ENCODE measurements at regions of chr2 and their contacts with region 1.

Region 1: DNA sequence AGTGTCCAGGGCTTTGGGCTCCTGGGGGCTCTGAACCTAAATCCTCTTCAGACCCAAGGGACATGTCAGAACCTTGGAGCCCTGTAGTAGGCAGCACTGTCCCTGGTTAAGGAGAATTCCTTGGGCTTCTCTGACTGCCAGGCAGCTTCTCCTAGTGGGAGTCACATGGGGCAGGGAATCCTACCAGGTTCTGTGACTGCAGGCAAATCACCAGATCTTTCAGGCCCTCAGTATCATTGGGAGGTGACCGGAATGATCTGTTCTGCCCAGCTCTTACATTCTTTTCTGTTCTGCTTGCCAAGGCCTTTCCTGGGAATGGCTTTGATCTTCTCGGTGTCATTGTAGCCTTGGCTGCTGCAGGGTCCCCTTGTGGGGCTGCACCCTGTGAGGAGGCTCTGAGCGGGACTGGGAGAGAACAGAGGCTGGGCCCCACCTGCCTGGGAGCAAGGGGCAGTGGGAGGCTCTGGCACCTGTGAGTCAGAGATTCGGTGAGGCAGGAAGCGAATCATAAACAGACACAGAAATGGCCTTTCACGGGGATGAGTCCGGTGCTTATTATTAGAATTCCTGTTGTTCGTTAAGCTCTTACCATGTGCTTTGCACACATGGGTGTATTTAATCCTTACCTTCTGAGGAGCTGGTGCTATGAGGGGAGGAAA is 14.1 kb downstream of the CEP68 start:
- DNase-seq: peak; percentile 64
- H3K4me3 ChIP-seq: no peak overlapping the region
- H3K27ac ChIP-seq: peak overlapping the region; percentile 23
- H3K4me1 ChIP-seq: peaks cover 45% of the 10 kb centered on the region
- H3K27me3 ChIP-seq: no peaks in the 10 kb centered on the region
- CTCF ChIP-seq: peak in 1 of 2 donors; percentile 45

Region 2: GRCh38 chr2:64192125-64192479 is 878.2 kb before region 1 on chr2:
- CTCF ChIA-PET with region 1: no interaction called
- dilution Hi-C with region 1: no loop called
- in situ Hi-C with region 1: no loop called
- intact Hi-C with region 1: no loop called
- DNase-seq: no peak
- H3K4me3 ChIP-seq: no peak overlapping the region
- H3K27ac ChIP-seq: no peak overlapping the region
- H3K4me1 ChIP-seq: no peaks in the 10 kb centered on the region
- H3K27me3 ChIP-seq: no peaks in the 10 kb centered on the region
- CTCF ChIP-seq: no peak

Region 3: GRCh38 chr2:65096948-65097347 is 26.6 kb after region 1 on chr2:
- CTCF ChIA-PET with region 1: no interaction called
- dilution Hi-C with region 1: no loop called
- in situ Hi-C with region 1: no loop called
- intact Hi-C with region 1: no loop called
- DNase-seq: peak; percentile 6
- H3K4me3 ChIP-seq: no peak overlapping the region
- H3K27ac ChIP-seq: no peak overlapping the region
- H3K4me1 ChIP-seq: no peaks in the 10 kb centered on the region
- H3K27me3 ChIP-seq: no peaks in the 10 kb centered on the region
- CTCF ChIP-seq: no peak

Region 4: DNA sequence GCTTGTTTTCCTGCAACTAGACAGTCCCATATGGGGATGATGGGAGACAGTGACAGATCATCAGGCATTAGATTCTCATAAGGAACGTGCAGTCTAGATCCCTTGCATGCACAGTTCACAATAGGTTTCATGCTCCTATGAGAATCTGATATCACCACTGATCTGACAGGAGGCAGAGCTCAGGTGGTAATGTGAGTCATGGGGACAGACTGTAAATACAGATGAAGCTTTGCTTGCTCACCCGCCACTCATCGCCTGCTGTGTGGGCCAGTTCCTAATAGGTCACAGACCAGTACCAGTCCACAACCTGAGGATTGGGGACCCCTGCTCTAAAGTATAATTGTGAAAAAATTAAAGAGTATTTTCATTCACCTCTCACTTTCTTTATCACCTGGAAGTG is 83.2 kb after region 1 on chr2:
- CTCF ChIA-PET with region 1: no interaction called
- dilution Hi-C with region 1: loop called (anchors 5 kb)
- in situ Hi-C with region 1: no loop called
- intact Hi-C with region 1: no loop called
- DNase-seq: peak; percentile 80
- H3K4me3 ChIP-seq: no peak overlapping the region
- H3K27ac ChIP-seq: no peak overlapping the region
- H3K4me1 ChIP-seq: peaks cover 8% of the 10 kb centered on the region
- H3K27me3 ChIP-seq: no peaks in the 10 kb centered on the region
- CTCF ChIP-seq: no peak

Region 5: GRCh38 chr2:65169760-65170136 is 99.4 kb after region 1 on chr2:
- CTCF ChIA-PET with region 1: interaction called, 7 read pairs
- dilution Hi-C with region 1: no loop called
- in situ Hi-C with region 1: no loop called
- intact Hi-C with region 1: loop called (anchors 1 kb)
- DNase-seq: no peak
- H3K4me3 ChIP-seq: no peak overlapping the region
- H3K27ac ChIP-seq: no peak overlapping the region
- H3K4me1 ChIP-seq: no peaks in the 10 kb centered on the region
- H3K27me3 ChIP-seq: no peaks in the 10 kb centered on the region
- CTCF ChIP-seq: no peak

Region 6: GRCh38 chr2:65278531-65278981 is 208.3 kb after region 1 on chr2:
- CTCF ChIA-PET with region 1: no interaction called
- dilution Hi-C with region 1: no loop called
- in situ Hi-C with region 1: no loop called
- intact Hi-C with region 1: no loop called
- DNase-seq: no peak
- H3K4me3 ChIP-seq: no peak overlapping the region
- H3K27ac ChIP-seq: no peak overlapping the region
- H3K4me1 ChIP-seq: no peaks in the 10 kb centered on the region
- H3K27me3 ChIP-seq: no peaks in the 10 kb centered on the region
- CTCF ChIP-seq: no peak